ENCODE measurements at regions of chr9 and their contacts with region 1.

Region 1: DNA sequence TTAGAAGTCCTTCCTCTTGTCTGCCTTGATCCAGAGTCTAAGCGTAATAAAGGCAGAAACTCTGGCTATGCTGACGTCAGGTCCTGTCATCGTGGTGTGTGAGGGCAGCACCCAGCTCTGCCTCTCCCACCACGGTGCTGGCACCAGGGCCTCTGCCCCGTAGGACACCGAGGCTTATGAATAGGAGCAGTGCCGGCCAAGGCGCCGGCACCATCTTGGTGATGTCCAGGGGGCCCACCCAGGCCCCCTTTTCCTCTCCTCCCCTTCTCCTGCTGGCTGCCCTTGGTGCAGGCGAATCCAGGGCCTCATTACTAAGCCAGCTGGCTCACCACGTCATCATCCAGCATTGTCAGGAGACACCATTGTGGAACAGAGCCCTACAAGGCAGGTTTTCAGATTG is 252.3 kb downstream of the FANCC start:
- DNase-seq: no peak
- ATAC-seq: peak; percentile 35

Region 2: DNA sequence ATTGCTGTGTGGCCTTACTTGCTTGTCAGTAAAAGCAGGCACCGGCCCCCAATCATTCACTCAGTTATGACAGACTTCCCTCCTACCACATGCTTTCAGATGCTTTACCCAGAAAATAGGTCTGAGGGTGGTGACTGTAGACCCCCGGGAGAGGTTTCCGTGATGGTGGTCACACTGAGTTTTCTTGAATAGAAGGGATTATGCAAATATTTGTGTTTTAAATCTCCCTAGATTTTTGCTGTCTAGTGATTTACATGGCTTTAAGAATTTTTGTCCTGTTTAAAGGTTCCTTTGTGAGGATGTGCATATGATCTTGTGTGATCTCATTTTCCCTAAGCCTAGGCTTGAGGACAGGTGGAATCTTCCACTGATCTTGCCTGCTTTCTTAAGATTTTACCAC is 29.4 kb before region 1 on chr9:
- intact Hi-C with region 1: loop called (anchors 1 kb)
- DNase-seq: no peak
- ATAC-seq: no peak

Region 3: GRCh38 chr9:95206143-95206542 is 140.9 kb after region 1 on chr9:
- intact Hi-C with region 1: no loop called
- DNase-seq: no peak
- ATAC-seq: no peak